Ascending aorta (tissue), 2 donors: ENCODE measurements at regions of chr11 and their contacts with region 1.

Region 1: DNA sequence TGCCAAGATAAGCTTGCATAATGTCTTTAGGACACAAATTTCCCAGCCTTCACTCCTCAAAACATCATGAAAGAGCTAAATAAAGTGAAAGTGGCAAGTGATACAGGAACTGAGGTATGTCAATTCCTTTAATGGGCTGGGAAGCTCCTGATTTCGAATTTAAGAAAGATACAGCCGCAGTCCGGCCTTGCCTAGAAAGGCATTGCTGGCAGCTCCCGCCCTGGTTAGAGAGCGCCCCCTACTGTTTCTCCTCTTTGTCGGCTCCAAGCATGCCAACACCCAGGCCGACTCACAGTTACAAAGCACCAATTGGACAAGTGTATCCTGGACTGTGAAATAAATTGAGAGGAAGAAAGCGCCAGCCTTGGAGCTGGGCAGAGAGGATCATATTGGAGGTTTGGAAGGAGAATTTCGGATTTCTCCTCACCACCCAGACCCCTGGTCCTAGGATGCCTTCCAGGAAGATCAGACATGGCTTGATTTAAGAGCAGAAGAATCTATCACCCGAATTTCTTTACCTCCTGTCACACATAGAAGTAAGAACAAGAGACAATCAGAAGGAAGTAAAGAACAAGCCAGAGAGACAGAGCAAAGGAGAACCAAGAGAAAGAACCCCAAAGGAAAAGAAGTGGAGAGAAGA is 84.0 kb downstream of the FAM76B start:
- DNase-seq: peak; percentile 51 to 94
- H3K4me3 ChIP-seq: no peak overlapping the region
- H3K27ac ChIP-seq: peak overlapping the region; percentile 60 to 63
- H3K4me1 ChIP-seq: peaks cover 0 to 8% of the 10 kb centered on the region in 2 donors
- H3K27me3 ChIP-seq: no peaks in the 10 kb centered on the region
- CTCF ChIP-seq: peak; percentile 89 to 96 (median 96)

Region 2: DNA sequence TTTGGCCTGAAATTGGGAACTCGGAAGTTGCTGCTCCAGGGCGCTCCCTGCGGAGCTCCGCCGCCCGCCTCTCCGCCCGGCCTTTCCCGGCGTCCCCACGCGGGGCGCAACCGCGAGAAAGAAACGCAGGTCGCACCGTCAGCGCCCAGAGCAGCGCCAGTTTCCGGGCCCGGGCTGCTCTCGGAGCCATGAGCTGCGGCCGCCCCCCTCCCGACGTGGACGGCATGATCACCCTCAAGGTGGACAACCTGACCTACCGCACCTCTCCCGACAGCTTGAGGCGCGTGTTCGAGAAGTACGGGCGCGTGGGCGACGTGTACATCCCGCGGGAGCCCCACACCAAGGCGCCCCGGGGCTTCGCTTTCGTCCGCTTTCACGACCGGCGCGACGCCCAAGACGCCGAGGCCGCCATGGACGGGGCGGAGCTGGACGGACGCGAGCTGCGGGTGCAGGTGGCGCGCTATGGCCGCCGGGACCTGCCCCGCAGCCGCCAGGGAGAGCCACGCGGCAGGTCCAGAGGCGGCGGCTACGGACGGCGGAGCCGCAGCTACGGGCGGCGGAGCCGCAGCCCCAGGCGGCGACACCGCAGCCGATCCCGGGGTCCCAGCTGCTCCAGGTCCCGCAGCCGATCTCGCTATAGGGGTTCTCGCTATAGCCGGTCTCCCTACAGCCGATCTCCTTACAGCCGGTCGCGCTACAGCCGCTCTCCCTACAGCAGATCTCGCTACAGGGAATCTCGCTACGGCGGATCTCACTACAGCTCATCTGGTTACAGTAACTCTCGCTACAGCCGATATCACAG is 638.4 kb before region 1 on chr11:
- intact Hi-C with region 1: loop called (anchors 5 kb)
- DNase-seq: peak in 1 of 2 donors; percentile 93
- H3K4me3 ChIP-seq: peak overlapping the region; percentile 88 to 95
- H3K27ac ChIP-seq: peak overlapping the region; percentile 98 to 99
- H3K4me1 ChIP-seq: peaks cover 0 to 14% of the 10 kb centered on the region in 2 donors
- H3K27me3 ChIP-seq: no peaks in the 10 kb centered on the region
- CTCF ChIP-seq: peak; percentile 71 to 78 (median 73)

Region 3: DNA sequence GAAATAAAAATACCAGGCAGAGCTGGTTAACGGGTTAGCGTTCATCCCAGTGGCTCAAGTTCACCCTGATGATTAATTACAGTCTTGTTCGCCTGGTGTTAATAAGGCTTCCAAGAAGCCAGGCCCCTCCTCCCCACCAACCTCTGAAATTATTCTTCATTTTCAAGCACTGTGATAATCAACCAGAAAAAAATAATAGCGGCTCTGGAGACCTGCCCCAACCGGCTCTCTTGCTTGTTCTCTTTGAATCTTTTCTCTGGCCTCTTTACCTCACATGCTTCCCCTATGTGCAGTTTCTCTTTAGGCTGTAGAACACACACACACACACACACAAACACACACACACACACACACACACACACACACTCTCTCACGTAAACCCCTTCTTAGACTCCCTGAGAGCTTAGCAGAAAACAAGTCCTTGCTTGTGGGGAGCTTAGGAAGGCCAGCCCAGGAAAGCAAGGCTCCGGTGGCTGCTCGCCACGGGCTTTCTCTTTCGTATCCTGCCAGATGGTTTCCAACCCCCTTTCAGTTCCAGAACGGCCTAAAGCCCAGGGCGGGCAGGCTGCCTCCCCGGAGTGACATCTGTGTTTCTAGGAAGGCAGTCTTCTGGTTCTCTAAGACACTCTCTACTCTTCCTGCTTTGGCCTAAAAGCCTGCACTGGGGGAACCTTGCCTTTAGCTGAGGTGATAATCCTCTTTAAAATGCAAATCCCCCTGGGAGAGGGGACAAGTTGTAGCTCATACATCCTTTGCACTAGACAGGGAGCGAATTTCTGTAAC is 368.2 kb before region 1 on chr11:
- intact Hi-C with region 1: loop called (anchors 10 kb)
- DNase-seq: peak in 1 of 2 donors; percentile 71
- H3K4me3 ChIP-seq: peak overlapping the region in 1 of 2 donors; percentile 46
- H3K27ac ChIP-seq: peak overlapping the region; percentile 77 to 88
- H3K4me1 ChIP-seq: peaks cover 7 to 28% of the 10 kb centered on the region in 2 donors
- H3K27me3 ChIP-seq: no peaks in the 10 kb centered on the region
- CTCF ChIP-seq: no peak

Region 4: DNA sequence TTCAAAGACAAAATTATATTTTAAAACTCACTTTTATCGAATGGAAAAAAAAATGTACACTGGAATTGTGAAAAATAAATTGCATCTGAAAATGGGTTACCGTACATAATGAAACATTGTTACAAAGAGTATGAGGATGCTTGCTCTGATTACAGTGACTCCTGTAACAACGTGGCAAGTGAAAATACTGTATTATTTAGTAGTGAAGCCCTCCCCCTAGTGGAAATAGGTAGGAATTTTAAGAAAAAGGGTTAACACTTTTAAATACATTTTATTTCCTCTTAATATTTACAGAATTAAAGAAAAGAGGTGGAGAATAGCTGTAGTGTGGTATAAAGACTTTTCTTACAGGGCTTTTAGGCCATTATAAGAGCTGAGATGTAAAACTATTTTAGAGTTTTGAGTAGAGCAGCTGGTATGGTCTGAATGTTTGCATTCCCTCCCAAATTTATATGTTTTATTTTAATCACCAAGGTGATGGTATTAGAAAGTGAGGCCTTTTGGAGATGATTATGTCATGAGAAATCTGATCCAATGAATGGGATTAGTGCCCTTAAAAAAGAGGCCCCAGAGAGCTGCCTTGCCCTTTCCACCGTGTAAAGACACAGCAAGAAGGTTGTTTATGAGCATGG is 58.8 kb after region 1 on chr11:
- intact Hi-C with region 1: loop called (anchors 5 kb)
- DNase-seq: no peak
- H3K4me3 ChIP-seq: no peak overlapping the region
- H3K27ac ChIP-seq: no peak overlapping the region
- H3K4me1 ChIP-seq: no peaks in the 10 kb centered on the region
- H3K27me3 ChIP-seq: no peaks in the 10 kb centered on the region
- CTCF ChIP-seq: peak; percentile 47 to 69 (median 59)

Region 5: GRCh38 chr11:95835768-95836488 is 130.3 kb after region 1 on chr11:
- intact Hi-C with region 1: no loop called
- DNase-seq: peak; percentile 10 to 72
- H3K4me3 ChIP-seq: no peak overlapping the region
- H3K27ac ChIP-seq: no peak overlapping the region
- H3K4me1 ChIP-seq: no peaks in the 10 kb centered on the region
- H3K27me3 ChIP-seq: no peaks in the 10 kb centered on the region
- CTCF ChIP-seq: peak; percentile 60 to 86 (median 84)